ENCODE measurements at regions of chr4 and their contacts with region 1.

Region 1: DNA sequence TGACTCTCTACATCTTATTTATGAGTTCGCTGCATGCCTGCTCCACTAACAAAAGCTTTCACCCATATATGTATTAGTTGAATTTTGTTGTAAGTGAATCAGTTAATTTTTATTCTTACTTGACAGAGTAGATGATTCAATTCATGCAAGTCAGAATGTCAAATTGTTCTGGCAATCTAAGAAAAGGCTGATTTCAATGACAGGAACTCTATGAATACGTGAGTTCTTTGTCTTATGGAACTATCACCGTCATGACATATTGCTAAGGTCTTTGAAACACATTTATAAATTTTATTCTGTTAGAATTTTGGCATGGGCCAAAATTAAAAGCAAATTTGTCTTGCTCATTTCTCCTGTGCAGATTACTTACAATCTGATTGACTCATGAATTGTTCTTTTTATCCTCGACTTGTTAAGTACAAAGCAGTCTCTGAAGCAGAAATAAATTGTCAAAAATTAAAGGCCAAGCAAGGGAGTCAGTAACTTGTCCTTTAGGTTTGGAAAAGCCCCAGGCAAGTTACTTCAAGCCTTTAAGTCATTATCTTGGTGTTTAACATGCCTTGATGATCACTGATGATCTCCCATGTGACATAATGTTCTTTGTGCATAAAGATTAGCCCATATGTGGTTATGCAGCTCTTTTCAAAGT is 89.0 kb upstream of the GC start:
- DNase-seq: no peak
- ATAC-seq: no peak
- H3K4me3 ChIP-seq: no peak overlapping the region
- H3K27ac ChIP-seq: no peak overlapping the region
- H3K4me1 ChIP-seq: no peaks in the 10 kb centered on the region
- H3K27me3 ChIP-seq: no peaks in the 10 kb centered on the region
- CTCF ChIP-seq: no peak

Region 2: DNA sequence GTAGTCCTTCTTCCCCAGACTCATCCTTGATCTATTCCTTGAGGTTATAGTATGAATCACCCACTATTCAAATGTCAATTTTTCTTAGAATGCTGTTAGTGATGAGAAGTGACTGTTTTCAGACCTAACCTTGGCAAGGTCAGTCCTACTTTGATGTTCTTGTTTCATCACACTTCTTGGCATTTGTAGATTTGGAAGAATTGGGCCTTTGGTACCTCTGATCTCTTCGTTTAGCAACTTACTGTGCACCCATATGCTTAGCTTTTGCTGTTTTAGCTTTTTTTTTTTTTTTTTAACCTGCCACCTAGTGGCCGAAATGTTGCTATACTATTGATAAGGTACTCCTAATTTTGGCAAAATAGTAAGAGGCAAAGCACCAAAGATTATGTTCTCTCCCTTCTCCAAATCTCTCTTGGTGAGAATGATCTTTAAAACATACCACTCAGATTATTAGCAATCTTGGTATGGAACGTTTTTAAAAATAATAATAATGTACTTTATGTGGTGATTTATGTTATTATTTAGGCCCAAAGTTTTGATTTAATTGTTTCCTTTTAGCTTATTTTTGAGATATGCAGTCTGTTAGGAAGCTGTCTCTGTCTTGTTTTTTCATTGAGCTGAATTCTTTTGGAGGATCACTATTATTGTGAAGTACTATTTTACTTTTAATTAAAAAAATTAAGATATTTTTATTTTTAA is 862.9 kb before region 1 on chr4:
- intact Hi-C with region 1: no loop called
- DNase-seq: no peak
- ATAC-seq: peak in 4 of 8 donors; percentile 46 to 57 (median 50)
- H3K4me3 ChIP-seq: no peak overlapping the region
- H3K27ac ChIP-seq: no peak overlapping the region
- H3K4me1 ChIP-seq: peaks cover 0 to 23% (median 0%) of the 10 kb centered on the region in 9 donors
- H3K27me3 ChIP-seq: no peaks in the 10 kb centered on the region
- CTCF ChIP-seq: peak; percentile 47 to 78 (median 67)

Region 3: DNA sequence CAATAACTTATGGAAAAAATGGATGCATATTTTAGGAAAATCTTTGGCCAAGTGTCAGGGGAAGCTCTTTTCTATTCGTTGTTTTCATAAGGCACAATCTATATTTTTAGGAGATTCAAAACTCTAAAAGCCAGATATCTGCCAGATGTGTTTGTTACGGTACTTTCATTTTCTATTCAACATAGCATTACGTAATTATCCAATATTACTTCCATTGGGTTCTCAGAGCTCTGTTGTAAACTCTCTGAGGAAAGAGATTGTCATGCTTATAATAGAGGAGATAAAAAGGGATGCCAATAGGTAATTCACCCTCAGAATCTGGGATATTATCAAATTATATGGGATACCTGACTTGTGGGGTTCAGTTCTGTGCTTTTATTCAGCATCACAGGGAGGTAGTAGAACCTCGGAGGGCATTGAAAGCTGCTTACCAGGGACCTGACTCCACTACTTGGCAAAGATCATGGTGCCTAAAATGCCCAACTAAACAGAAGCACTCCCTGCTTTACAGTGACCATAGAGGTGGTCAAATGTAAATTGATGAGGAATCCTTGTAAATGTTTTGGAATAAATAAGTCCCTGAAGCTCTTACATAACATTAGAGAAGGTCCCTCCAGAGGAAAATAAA is 56.1 kb before region 1 on chr4:
- intact Hi-C with region 1: loop called in 1 of 10 experiments (anchors 5 kb)
- DNase-seq: no peak
- ATAC-seq: no peak
- H3K4me3 ChIP-seq: no peak overlapping the region
- H3K27ac ChIP-seq: no peak overlapping the region
- H3K4me1 ChIP-seq: no peaks in the 10 kb centered on the region
- H3K27me3 ChIP-seq: no peaks in the 10 kb centered on the region
- CTCF ChIP-seq: no peak

Measured in heart right ventricle (tissue), 16 donors.